ENCODE measurements at regions of chr17 and their contacts with region 1.

Region 1: GRCh38 chr17:63549946-63550807 is at the start of gene DCAF7:
- DNase-seq: peak; percentile 100
- total RNA-seq, gene DCAF7: 47.4 TPM

Region 2: DNA sequence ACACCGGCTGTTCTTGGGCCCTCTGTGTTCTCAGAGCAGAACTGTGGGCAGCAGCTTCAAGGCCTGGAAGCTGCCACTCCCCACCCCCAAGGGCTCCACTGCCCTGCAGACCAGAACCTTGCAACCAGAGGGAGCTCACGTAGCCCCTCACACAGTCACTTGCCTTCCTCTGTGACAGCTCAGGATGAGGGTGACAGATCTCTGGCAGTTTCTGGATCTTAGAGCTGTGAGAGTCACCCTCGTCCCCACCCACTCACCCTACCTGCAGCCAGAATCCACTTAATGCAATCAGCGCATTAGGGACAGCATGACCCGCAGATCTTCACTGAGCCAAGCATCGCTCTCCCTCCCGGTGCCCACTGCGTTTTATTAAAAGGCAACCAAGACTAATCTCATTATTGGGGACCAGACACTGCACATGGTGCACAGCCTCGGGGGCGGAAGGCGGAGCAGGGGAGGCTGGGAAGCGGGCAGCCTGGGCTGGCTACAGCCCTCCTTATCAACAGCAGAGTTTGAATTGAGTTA is 107.6 kb before region 1 on chr17:
- intact Hi-C with region 1: loop called (anchors 5 kb)
- DNase-seq: no peak

Region 3: GRCh38 chr17:63600569-63601438 is 50.6 kb after region 1 on chr17 and contains the start of gene TACO1:
- intact Hi-C with region 1: loop called (anchors 2 kb)
- DNase-seq: peak; percentile 92
- total RNA-seq, gene TACO1: 39.4 TPM